ENCODE measurements at regions of chr14 and their contacts with region 1.

Region 1: GRCh38 chr14:22900081-22900799 is 17.2 kb downstream of the REM2 start:
- DNase-seq: peak; percentile 66
- ATAC-seq: peak; percentile 82
- H3K4me3 Mint-ChIP-seq: no peak overlapping the region
- H3K27ac Mint-ChIP-seq: no peak overlapping the region
- H3K4me1 Mint-ChIP-seq: peaks cover 13% of the 10 kb centered on the region
- H3K27me3 Mint-ChIP-seq: no peaks in the 10 kb centered on the region
- CTCF ChIP-seq: peak; percentile 60

Region 2: GRCh38 chr14:22822571-22823098 is 77.6 kb before region 1 on chr14:
- CTCF ChIA-PET with region 1: interaction called, 28 read pairs
- POLR2A ChIA-PET with region 1: no interaction called
- intact Hi-C with region 1: no loop called
- DNase-seq: peak; percentile 78
- ATAC-seq: peak; percentile 83
- H3K4me3 Mint-ChIP-seq: peak overlapping the region; percentile 59
- H3K27ac Mint-ChIP-seq: no peak overlapping the region
- H3K4me1 Mint-ChIP-seq: peaks cover 27% of the 10 kb centered on the region
- H3K27me3 Mint-ChIP-seq: peaks cover 13% of the 10 kb centered on the region
- CTCF ChIP-seq: peak; percentile 95

Region 3: DNA sequence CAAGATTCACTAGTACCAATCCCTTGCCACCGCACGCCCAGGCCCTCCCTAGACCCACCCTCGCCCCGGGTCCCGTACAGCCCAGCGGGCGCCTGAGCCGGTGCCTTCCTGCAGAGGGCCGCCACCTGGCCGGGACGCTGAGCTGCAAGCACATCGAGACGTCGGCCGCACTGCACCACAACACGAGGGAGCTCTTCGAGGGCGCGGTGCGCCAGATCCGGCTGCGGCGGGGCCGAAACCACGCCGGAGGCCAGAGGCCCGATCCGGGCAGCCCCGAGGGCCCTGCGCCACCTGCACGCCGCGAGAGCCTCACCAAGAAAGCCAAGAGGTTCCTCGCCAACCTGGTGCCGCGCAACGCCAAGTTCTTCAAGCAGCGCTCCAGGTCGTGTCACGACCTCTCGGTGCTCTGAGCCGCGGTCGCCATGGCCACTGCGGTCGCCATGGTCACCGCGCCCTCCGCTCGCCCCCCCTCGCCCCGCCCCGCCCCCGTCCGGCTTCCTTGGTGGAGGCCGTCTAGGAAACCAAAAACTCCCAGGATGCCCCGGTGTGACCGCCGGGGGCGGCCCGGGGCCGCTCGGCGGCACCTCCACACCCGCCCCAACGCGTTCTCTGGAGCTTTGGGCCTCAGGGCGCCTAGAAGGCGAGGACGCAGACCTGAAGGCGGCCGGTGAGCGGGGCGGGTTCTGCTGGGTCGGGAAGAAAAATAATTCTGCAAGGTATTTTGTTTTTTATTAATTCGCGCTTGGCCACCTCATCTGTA is 13.6 kb before region 1 on chr14:
- CTCF ChIA-PET with region 1: interaction called, 119 read pairs
- POLR2A ChIA-PET with region 1: interaction called, 7 read pairs
- intact Hi-C with region 1: no loop called
- DNase-seq: peak; percentile 81
- ATAC-seq: peak; percentile 71
- H3K4me3 Mint-ChIP-seq: peak overlapping the region; percentile 70
- H3K27ac Mint-ChIP-seq: peak overlapping the region; percentile 77
- H3K4me1 Mint-ChIP-seq: peaks cover 38% of the 10 kb centered on the region
- H3K27me3 Mint-ChIP-seq: peaks cover 1% of the 10 kb centered on the region
- CTCF ChIP-seq: peak; percentile 35

Region 4: DNA sequence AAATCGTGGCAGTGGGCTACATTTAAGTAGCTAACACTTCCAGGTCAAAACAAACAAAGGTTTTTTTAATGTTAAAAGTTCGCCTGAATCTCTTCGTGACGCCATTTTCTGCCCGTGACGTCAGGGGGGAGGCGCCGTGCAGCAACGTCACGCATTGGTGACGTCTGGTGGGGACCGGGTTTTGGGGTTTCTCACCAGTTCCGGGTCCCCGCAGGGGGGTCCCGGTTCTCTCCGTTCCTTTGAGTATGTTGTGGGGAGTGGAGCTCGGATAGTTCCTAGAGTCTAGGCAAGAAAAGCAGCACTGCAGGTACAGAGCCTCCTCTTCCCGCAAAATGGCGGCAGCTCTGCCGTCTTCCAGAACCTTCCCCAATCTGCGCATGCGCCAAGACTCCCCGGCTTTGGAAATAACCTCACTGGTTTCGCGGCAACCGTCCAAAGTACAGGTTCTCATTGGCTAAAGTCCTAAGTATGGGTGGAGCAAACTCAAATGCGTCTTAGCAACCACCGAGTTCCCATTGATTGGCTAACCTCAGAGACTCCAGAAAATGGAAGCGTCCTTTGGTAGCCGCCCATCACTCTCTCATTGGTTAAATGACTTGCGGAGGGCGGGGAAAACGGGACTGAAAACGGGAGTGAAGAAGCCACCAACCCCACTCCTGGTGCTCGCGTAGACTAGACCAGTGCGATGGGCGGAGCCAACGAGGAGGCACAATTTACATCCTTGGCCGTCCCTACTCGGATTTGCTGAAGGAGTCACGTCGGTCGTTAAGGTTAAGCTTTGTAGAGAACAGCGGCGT is 18.8 kb after region 1 on chr14 and contains the start of gene RBM23:
- CTCF ChIA-PET with region 1: interaction called, 30 read pairs
- POLR2A ChIA-PET with region 1: interaction called, 14 read pairs
- intact Hi-C with region 1: no loop called
- DNase-seq: peak; percentile 100
- ATAC-seq: peak; percentile 95
- H3K4me3 Mint-ChIP-seq: peak within 1 kb of the TSS; percentile 89
- H3K27ac Mint-ChIP-seq: peak within 1 kb of the TSS; percentile 98
- H3K4me1 Mint-ChIP-seq: peaks cover 36% of the 10 kb centered on the region
- H3K27me3 Mint-ChIP-seq: no peaks in the 10 kb centered on the region
- CTCF ChIP-seq: no peak
- total RNA-seq, gene RBM23: 46.9 to 55.2 TPM